ENCODE measurements at regions of chr1 and their contacts with region 1.

Region 1: GRCh38 chr1:231421993-231422764 is at the start of gene EGLN1:
- DNase-seq: peak; percentile 90 to 94 (median 91)
- ATAC-seq: peak; percentile 71 to 96 (median 88)
- H3K4me3 ChIP-seq: peak within 1 kb of the TSS; percentile 76 to 97 (median 84)
- H3K27ac ChIP-seq: peak within 1 kb of the TSS; percentile 89 to 100 (median 99)
- H3K4me1 ChIP-seq: peaks cover 0 to 55% (median 36%) of the 10 kb centered on the region in 12 donors
- H3K27me3 ChIP-seq: no peaks in the 10 kb centered on the region
- CTCF ChIP-seq: peak in 6 of 12 donors; percentile 16 to 51 (median 33)
- POLR2A ChIP-seq: peak in 1 of 2 donors; percentile 85
- total RNA-seq, gene EGLN1: 51.6 to 122 (median 77.8) TPM

Region 2: DNA sequence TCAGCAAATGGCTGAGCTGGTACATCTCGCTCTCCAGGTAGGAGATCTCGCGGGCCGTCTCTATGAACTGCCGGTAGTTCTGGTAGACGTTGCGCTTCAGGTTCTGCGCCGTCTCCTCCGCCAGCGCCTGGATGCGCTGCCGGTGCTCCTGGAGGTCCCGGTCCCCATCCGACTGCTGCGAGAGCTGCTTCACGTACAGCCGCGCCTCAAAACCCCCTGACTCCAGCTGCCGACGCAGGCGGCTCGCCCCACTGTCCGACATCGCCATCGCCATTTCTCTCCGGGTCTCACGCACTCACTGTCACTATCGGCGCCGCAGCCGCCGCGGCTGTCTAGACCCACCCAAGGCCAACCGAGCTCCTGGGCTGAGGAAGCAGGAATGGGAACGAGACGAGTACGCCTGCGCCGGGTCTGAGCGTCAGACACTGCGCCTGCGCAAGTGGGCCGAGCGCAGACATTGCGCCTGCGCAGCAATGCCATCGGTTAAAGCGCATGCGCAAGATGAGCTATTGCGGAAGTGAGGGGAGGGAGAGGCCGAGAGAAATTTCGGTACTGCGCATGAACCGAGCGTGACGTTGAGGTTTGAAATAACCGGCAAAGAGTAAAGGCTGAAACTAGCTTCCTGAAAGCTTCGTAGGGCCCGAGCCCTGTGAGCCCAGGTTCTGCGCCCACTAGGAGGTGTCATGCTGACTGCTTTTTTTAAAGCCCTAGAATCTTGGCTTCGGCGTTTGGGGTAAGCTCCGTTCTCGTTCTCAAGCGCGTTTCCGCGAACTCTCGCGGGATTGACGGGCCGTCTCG is 84.5 kb before region 1 on chr1 and contains the start of gene EXOC8:
- intact Hi-C with region 1: loop called in 1 of 10 experiments (anchors 10 kb)
- DNase-seq: peak; percentile 94 to 98 (median 95)
- ATAC-seq: peak; percentile 95 to 97 (median 96)
- H3K4me3 ChIP-seq: peak within 1 kb of the TSS; percentile 63 to 96 (median 82)
- H3K27ac ChIP-seq: peak within 1 kb of the TSS; percentile 76 to 98 (median 96)
- H3K4me1 ChIP-seq: peaks cover 14 to 63% (median 52%) of the 10 kb centered on the region in 12 donors
- H3K27me3 ChIP-seq: no peaks in the 10 kb centered on the region
- CTCF ChIP-seq: peak in 1 of 12 donors; percentile 11
- POLR2A ChIP-seq: peak in 1 of 2 donors; percentile 93
- total RNA-seq, gene EXOC8: 10.2 to 14.8 (median 12.8) TPM

Region 3: GRCh38 chr1:231364192-231364591 is 58.0 kb before region 1 on chr1:
- intact Hi-C with region 1: loop called in 5 of 10 experiments (anchors 2 to 10 kb)
- DNase-seq: no peak
- ATAC-seq: no peak
- H3K4me3 ChIP-seq: no peak overlapping the region
- H3K27ac ChIP-seq: no peak overlapping the region
- H3K4me1 ChIP-seq: peaks cover 0 to 20% (median 4%) of the 10 kb centered on the region in 12 donors
- H3K27me3 ChIP-seq: no peaks in the 10 kb centered on the region
- CTCF ChIP-seq: no peak
- POLR2A ChIP-seq: no peak

Region 4: GRCh38 chr1:231383159-231383860 is 38.9 kb before region 1 on chr1:
- intact Hi-C with region 1: loop called in 7 of 10 experiments (anchors 5 kb)
- DNase-seq: no peak
- ATAC-seq: peak in 3 of 4 donors; percentile 32 to 54 (median 42)
- H3K4me3 ChIP-seq: no peak overlapping the region
- H3K27ac ChIP-seq: peak overlapping the region in 1 of 12 donors; percentile 2
- H3K4me1 ChIP-seq: peaks cover 3 to 90% (median 53%) of the 10 kb centered on the region in 12 donors
- H3K27me3 ChIP-seq: no peaks in the 10 kb centered on the region
- CTCF ChIP-seq: no peak
- POLR2A ChIP-seq: no peak

Region 5: GRCh38 chr1:231512147-231512698 is 90.0 kb after region 1 on chr1:
- intact Hi-C with region 1: no loop called
- DNase-seq: no peak
- ATAC-seq: no peak
- H3K4me3 ChIP-seq: no peak overlapping the region
- H3K27ac ChIP-seq: no peak overlapping the region
- H3K4me1 ChIP-seq: peaks cover 0 to 24% (median 0%) of the 10 kb centered on the region in 12 donors
- H3K27me3 ChIP-seq: no peaks in the 10 kb centered on the region
- CTCF ChIP-seq: no peak
- POLR2A ChIP-seq: no peak

Region 6: DNA sequence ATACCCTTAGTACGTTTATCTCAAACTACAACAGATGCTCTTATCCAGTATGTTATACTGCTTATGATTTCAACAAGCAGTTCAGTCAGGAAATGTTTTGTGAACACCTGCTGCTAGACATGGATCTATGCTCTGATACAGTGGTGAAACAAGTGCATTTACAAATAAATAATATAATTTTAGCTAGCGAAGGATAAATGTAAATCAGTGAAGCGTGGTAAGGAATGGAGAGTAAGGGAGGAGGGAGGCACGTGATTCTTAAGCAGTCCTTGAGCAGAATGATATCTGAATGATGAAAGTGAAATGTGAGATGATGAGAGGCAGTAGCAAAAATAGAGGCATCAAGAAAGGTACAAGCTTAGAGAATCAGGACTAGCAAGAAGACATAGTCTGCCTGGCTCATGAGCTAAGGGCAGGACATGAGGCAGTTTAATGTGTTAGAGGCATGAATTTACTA is 112.6 kb after region 1 on chr1:
- intact Hi-C with region 1: loop called in 9 of 10 experiments (anchors 2 to 5 kb)
- DNase-seq: no peak
- ATAC-seq: peak in 2 of 4 donors; percentile 33 to 39
- H3K4me3 ChIP-seq: no peak overlapping the region
- H3K27ac ChIP-seq: peak overlapping the region in 4 of 12 donors; percentile 3 to 43 (median 14)
- H3K4me1 ChIP-seq: peaks cover 7 to 57% (median 47%) of the 10 kb centered on the region in 12 donors
- H3K27me3 ChIP-seq: no peaks in the 10 kb centered on the region
- CTCF ChIP-seq: no peak
- POLR2A ChIP-seq: no peak

Region 7: GRCh38 chr1:231590453-231591198 is 168.4 kb after region 1 on chr1:
- intact Hi-C with region 1: loop called in 3 of 10 experiments (anchors 2 to 5 kb)
- DNase-seq: peak in 4 of 5 donors; percentile 47 to 70 (median 53)
- ATAC-seq: peak; percentile 64 to 95 (median 92)
- H3K4me3 ChIP-seq: no peak overlapping the region
- H3K27ac ChIP-seq: peak overlapping the region in 1 of 12 donors; percentile 10
- H3K4me1 ChIP-seq: peaks cover 0 to 16% (median 6%) of the 10 kb centered on the region in 12 donors
- H3K27me3 ChIP-seq: no peaks in the 10 kb centered on the region
- CTCF ChIP-seq: peak; percentile 65 to 85 (median 76)
- POLR2A ChIP-seq: no peak

Region 8: GRCh38 chr1:231603598-231604275 is 181.6 kb after region 1 on chr1:
- intact Hi-C with region 1: loop called in 3 of 10 experiments (anchors 5 kb)
- DNase-seq: no peak
- ATAC-seq: peak in 3 of 4 donors; percentile 46 to 67 (median 56)
- H3K4me3 ChIP-seq: peak overlapping the region in 10 of 12 donors; percentile 37 to 61 (median 52)
- H3K27ac ChIP-seq: peak overlapping the region in 7 of 12 donors; percentile 30 to 67 (median 40)
- H3K4me1 ChIP-seq: peaks cover 0 to 44% (median 23%) of the 10 kb centered on the region in 12 donors
- H3K27me3 ChIP-seq: no peaks in the 10 kb centered on the region
- CTCF ChIP-seq: peak; percentile 66 to 88 (median 78)
- POLR2A ChIP-seq: no peak